ENCODE measurements at regions of chr6 and their contacts with region 1.

Region 1: DNA sequence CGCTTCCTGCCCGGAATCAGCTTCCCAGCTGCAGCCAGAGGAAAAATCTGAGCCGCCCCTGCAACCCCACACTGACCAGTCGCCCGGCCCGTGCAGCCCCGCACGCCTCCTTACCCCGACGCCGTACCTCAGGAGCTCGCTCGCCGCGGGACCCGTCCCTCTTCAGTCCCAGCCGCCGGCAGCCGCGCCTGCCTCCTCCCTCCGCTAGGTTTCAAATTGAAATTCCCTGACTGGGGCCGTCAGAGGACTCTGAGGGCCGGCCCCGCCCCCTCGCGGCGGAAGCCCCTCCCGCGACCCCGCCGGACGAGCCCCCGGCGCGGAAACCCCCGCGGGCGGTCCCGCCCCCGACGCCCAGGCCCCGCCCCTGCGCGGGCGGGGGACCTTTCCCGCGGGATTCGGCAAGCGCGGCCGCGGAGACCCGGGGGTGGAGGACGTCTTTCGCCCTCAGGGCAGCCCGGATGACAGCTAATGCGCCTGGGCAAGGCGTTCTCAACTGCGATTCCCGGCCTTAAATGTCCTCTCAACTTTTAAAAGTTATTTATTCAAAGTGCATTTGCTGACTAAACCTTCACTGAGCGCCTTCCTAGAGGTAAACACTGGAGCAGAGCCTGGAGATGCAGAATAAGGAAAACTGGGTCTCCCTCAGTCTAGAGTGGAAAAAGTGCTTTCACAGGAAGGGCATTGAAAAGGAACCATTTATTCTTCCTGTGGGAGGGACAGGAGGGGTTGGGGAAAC is at the start of gene EPB41L2:
- DNase-seq: peak; percentile 95
- ATAC-seq: peak; percentile 90
- H3K4me3 Mint-ChIP-seq: peak within 1 kb of the TSS; percentile 89
- H3K27ac Mint-ChIP-seq: peak within 1 kb of the TSS; percentile 71
- H3K4me1 Mint-ChIP-seq: peaks cover 37% of the 10 kb centered on the region
- H3K27me3 Mint-ChIP-seq: no peaks in the 10 kb centered on the region
- CTCF ChIP-seq: no peak
- total RNA-seq, gene EPB41L2: 62.7 and 62.8 TPM in 2 replicates

Region 2: DNA sequence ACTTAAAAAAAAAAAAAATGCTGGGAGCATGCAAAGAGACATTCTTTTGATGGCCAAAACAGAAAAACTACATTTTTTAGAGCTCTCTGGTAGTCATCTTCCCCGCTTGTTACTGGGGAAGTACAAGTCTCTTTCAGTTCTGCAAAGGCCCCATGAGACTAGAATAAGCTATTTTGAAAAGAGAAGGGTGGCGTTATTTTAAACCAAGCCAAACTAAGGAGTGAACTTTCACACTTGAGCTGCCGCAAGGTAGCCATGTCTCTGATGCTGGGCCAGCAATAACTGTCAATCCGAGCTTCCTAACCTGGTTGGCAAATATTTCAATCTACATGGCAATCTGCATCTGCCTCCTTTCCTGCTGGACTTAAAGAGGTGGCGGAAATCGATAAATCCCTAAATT is 948.2 kb before region 1 on chr6:
- CTCF ChIA-PET with region 1: no interaction called
- POLR2A ChIA-PET with region 1: no interaction called
- intact Hi-C with region 1: loop called (anchors 10 kb)
- DNase-seq: no peak
- ATAC-seq: peak; percentile 91
- H3K4me3 Mint-ChIP-seq: peak overlapping the region; percentile 73
- H3K27ac Mint-ChIP-seq: peak overlapping the region; percentile 96
- H3K4me1 Mint-ChIP-seq: peaks cover 79% of the 10 kb centered on the region
- H3K27me3 Mint-ChIP-seq: no peaks in the 10 kb centered on the region
- CTCF ChIP-seq: no peak

Region 3: DNA sequence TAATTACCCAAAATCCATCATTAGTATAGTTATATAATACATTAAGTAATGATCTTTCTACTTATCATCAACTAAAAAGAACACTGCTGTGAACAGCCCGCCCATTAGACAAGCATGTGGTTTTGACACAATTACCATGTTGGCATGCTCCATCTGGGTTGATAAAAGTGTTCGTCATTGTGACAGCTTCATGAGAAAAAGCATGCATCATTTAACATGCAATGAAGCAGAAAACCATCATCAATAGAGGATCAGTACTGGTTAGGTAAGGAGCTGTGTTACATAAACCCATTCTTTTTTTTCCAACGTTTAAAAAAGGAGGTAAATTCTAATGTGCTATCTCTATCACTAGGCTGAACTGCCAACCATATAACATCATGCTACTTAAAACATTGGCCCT is 102.0 kb before region 1 on chr6:
- CTCF ChIA-PET with region 1: no interaction called
- POLR2A ChIA-PET with region 1: no interaction called
- intact Hi-C with region 1: loop called (anchors 5 kb)
- DNase-seq: no peak
- ATAC-seq: no peak
- H3K4me3 Mint-ChIP-seq: no peak overlapping the region
- H3K27ac Mint-ChIP-seq: no peak overlapping the region
- H3K4me1 Mint-ChIP-seq: peaks cover 47% of the 10 kb centered on the region
- H3K27me3 Mint-ChIP-seq: no peaks in the 10 kb centered on the region
- CTCF ChIP-seq: no peak

Region 4: DNA sequence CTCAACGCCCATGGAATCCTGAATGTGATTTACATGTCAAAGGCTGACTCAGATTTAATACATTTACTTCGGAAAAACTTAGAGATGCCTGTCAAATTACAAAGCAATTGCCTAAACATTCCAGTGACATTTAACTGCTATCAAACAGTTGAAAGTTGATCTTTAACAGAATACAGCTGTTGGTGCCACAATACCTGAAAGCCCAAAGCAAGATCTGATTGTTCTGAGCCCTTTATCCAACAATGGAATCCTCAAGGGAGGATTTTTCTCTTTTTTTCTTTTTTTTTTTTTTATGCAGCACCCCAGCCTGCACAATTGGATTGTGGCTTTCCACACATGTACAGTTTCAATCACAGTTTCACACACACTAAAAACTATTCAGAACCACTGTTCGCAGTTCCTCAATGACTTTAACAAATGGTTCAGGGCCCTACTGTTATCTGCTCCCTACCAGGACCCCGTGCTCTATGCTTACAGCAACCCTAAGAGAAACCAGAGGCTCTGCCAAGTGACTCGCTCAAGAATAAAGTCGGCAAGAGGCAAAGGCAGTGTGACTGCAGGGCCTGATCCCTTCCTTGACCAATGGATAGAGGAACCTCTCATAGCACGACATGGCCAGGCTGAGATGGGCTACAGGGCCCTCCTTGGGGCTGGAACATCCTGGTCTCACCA is 33.4 kb before region 1 on chr6:
- CTCF ChIA-PET with region 1: no interaction called
- POLR2A ChIA-PET with region 1: no interaction called
- intact Hi-C with region 1: no loop called
- DNase-seq: no peak
- ATAC-seq: no peak
- H3K4me3 Mint-ChIP-seq: no peak overlapping the region
- H3K27ac Mint-ChIP-seq: no peak overlapping the region
- H3K4me1 Mint-ChIP-seq: peaks cover 24% of the 10 kb centered on the region
- H3K27me3 Mint-ChIP-seq: no peaks in the 10 kb centered on the region
- CTCF ChIP-seq: no peak

Region 5: DNA sequence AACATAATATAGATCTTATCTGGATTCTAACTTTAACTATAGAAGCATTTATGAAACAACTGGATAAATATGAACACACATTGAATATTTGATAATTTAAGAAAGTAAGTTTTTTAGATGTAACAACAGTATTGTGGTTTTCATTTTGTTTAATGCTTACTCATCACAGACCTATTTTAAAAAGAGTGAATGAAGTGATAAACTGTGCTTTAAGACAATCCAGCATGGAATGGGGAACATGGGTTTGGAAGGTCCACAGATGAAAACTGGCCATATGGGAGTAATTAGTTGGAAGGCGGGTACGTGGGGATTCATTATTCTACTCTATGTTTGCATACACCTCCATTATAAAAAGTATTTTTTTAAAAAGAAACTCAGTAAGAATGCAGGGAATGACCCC is 21.4 kb before region 1 on chr6:
- CTCF ChIA-PET with region 1: no interaction called
- POLR2A ChIA-PET with region 1: no interaction called
- intact Hi-C with region 1: no loop called
- DNase-seq: no peak
- ATAC-seq: no peak
- H3K4me3 Mint-ChIP-seq: no peak overlapping the region
- H3K27ac Mint-ChIP-seq: no peak overlapping the region
- H3K4me1 Mint-ChIP-seq: no peaks in the 10 kb centered on the region
- H3K27me3 Mint-ChIP-seq: no peaks in the 10 kb centered on the region
- CTCF ChIP-seq: no peak

Region 6: DNA sequence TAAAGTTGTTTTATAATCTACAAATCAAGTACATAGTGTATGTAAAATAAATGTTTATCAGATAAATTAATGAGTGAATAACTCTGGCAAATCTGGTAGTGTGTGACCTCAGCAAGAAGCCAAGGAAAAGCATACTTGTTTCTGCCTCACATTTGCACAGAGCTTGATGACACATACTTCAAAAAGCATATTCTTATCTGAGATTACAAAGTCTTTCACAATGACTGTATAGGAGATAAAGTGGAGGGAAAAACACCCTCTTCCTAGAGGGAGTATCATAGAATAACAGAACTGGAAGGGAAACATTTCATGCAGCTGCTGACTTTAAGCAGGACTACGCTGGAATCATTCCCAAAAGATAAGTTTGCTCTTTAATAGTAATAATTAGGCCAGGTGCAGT is 44.0 kb after region 1 on chr6:
- CTCF ChIA-PET with region 1: no interaction called
- POLR2A ChIA-PET with region 1: no interaction called
- intact Hi-C with region 1: loop called (anchors 1 kb)
- DNase-seq: no peak
- ATAC-seq: no peak
- H3K4me3 Mint-ChIP-seq: no peak overlapping the region
- H3K27ac Mint-ChIP-seq: no peak overlapping the region
- H3K4me1 Mint-ChIP-seq: peaks cover 27% of the 10 kb centered on the region
- H3K27me3 Mint-ChIP-seq: no peaks in the 10 kb centered on the region
- CTCF ChIP-seq: no peak

Region 7: GRCh38 chr6:131199568-131200272 is 136.5 kb after region 1 on chr6:
- CTCF ChIA-PET with region 1: no interaction called
- POLR2A ChIA-PET with region 1: no interaction called
- intact Hi-C with region 1: loop called (anchors 5 kb)
- DNase-seq: peak; percentile 44
- ATAC-seq: peak; percentile 100
- H3K4me3 Mint-ChIP-seq: peak overlapping the region; percentile 72
- H3K27ac Mint-ChIP-seq: peak overlapping the region; percentile 87
- H3K4me1 Mint-ChIP-seq: peaks cover 36% of the 10 kb centered on the region
- H3K27me3 Mint-ChIP-seq: no peaks in the 10 kb centered on the region
- CTCF ChIP-seq: peak; percentile 16

Region 8: DNA sequence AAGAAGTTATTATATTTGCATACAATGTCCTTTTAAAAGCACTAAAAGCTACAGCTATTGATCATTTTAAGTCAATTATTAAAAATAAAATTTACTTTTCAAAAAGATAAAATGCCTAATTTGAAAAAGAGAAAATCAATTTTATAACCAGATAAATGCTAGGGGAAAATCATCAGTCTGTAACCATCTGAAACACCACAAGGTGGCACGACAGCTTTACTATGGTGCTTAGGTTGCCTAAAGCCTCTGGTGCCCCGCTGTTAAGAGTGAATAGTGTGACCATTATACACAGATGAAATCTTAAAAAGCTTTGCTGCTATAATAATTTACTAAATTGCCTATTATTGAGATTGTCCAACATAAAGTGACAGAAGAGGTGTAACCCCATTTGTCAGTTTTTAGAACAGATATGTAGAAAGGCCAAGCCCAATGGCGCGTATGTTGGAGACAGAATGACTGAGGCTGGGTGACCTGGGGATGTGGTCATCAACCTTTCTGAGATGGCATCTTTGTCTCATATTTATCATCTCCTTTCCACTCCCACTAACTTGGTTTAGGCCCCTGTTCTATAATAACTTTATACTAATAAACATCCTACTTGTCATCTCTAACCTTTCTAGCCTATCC is 1237.2 kb after region 1 on chr6:
- CTCF ChIA-PET with region 1: no interaction called
- POLR2A ChIA-PET with region 1: no interaction called
- intact Hi-C with region 1: no loop called
- DNase-seq: no peak
- ATAC-seq: peak; percentile 98
- H3K4me3 Mint-ChIP-seq: no peak overlapping the region
- H3K27ac Mint-ChIP-seq: no peak overlapping the region
- H3K4me1 Mint-ChIP-seq: no peaks in the 10 kb centered on the region
- H3K27me3 Mint-ChIP-seq: no peaks in the 10 kb centered on the region
- CTCF ChIP-seq: peak; percentile 67

Region 9: GRCh38 chr6:132512638-132513632 is 1449.7 kb after region 1 on chr6 and contains the start of gene STX7:
- CTCF ChIA-PET with region 1: no interaction called
- POLR2A ChIA-PET with region 1: no interaction called
- intact Hi-C with region 1: loop called (anchors 5 kb)
- DNase-seq: peak; percentile 89
- ATAC-seq: peak; percentile 82
- H3K4me3 Mint-ChIP-seq: peak within 1 kb of the TSS; percentile 96
- H3K27ac Mint-ChIP-seq: peak within 1 kb of the TSS; percentile 97
- H3K4me1 Mint-ChIP-seq: peaks cover 68% of the 10 kb centered on the region
- H3K27me3 Mint-ChIP-seq: no peaks in the 10 kb centered on the region
- CTCF ChIP-seq: no peak
- total RNA-seq, gene STX7: 109 and 138 TPM in 2 replicates

Measured in activated B cell treated with CpG ODN at 0.5 μM for 24 hours (primary cell).